RWPE1 (cell line): ENCODE measurements at regions of chr3 and their contacts with region 1.

Region 1: GRCh38 chr3:101849051-101849720 is at the start of gene NFKBIZ:
- DNase-seq: peak; percentile 95
- H3K27ac ChIP-seq: peak within 1 kb of the TSS; percentile 90
- CTCF ChIP-seq: no peak

Region 2: DNA sequence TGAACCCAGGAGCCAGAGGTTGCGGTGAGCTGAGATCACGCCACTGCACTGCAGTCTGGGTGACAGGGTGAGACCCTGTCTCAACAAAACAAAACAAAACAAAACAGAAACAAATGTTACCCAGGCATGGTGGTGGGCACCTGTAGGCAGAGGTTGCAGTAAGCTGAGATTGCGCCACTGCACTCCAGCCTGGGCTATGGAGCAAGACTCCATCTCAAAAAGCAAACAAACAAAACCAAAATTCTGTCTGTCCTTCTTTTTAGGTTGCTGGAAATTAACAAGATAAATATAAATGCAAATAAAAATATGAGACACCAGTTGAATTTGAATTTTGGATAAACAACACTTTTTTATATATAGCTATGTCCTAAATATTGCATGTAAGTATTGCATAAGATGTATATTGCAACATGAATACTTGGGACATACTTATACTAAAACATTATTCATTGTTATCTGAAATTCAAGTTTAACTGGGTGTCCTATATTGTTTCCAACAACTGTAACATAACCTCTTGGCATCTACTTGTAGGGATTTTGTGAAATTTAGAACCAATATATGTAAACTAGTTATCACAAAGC is 129.5 kb before region 1 on chr3:
- CTCF ChIA-PET with region 1: no interaction called
- POLR2A ChIA-PET with region 1: no interaction called
- DNase-seq: no peak
- H3K27ac ChIP-seq: peak overlapping the region; percentile 69
- CTCF ChIP-seq: no peak

Region 3: DNA sequence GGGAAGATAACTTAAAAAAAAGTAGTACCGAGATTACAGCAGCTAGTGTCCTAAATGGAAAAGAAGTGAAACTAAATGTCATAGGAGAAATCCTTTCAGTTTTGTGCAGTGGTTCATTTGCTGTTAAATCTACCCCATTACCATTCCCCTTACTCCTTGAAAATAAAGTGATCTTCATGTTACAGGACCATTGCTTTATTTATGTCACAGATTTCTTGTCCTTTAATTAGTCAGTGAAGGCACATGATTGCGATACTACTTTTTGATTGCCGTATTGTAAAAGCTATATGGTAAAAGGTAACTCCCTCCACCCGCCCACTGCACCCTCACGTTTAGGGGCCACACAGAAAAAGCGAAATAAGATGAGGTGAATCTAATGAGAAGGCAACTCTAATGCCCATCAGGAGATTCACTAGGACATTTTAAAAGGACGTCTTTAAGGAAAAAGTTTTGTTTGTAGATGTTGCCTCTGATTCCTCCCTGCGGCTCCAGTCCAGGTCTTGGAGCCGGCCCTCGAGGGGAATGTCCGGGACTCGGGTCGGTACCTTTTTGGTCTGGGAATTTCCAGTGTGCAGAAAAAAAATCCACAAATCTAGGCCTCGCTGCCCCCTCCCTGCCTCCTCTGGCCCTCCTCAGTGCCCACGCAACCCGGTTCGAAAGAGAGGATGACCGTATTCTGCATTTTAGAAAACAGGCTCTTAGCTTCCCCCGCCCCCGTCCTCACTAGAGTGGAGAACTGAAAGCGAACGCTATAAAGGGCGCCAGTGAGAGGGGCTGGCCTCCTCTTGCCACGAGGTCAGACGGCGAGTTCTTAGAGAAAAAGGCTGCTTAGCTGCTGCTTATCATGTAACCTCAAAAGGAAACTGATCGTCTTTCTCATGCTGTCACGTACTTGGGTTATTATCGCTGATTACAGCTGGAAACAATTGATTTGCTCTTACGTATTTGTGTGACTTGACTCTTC is 21.7 kb before region 1 on chr3:
- CTCF ChIA-PET with region 1: interaction called, 7 read pairs
- POLR2A ChIA-PET with region 1: interaction called, 15 read pairs
- DNase-seq: peak; percentile 40
- H3K27ac ChIP-seq: peak overlapping the region; percentile 80
- CTCF ChIP-seq: no peak